ENCODE measurements at regions of chr4 and their contacts with region 1.

Region 1: DNA sequence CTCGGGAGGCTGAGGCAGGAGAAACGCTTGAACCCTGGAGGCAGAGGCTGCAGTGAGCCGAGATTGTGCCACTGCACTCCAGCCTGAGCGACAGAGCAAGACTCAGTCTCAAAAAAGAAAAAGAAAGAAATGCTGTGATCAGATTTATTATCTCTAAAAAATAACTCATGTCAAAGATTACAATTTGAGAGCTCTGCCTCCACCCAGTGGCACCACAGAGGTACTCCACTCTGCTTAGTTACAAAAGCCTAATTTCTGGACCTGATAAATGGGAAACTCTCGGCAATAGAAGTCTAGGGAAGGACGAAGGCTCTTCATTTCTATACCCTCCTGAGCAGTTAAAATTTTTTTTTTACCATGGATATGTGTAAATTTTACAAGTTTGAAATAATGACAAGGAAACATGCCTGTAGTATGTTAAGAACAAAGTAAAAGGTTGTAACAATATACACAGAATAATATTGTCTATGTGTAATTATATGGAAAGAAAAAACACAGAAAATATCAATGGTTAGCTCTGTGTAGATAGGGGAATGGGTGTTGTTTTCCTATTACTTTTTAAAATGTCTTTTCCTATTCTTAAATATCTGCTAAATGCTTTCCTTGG is 149.8 kb downstream of the STIM2 start:
- DNase-seq: peak; percentile 43 to 55
- H3K4me3 ChIP-seq: no peak overlapping the region
- H3K4me3 Mint-ChIP-seq: no peak overlapping the region
- H3K27ac Mint-ChIP-seq: no peak overlapping the region
- H3K4me1 ChIP-seq: no peaks in the 10 kb centered on the region
- H3K4me1 Mint-ChIP-seq: no peaks in the 10 kb centered on the region
- H3K27me3 ChIP-seq: no peaks in the 10 kb centered on the region
- H3K27me3 Mint-ChIP-seq: no peaks in the 10 kb centered on the region
- CTCF ChIP-seq: peak; percentile 74 to 80

Region 2: DNA sequence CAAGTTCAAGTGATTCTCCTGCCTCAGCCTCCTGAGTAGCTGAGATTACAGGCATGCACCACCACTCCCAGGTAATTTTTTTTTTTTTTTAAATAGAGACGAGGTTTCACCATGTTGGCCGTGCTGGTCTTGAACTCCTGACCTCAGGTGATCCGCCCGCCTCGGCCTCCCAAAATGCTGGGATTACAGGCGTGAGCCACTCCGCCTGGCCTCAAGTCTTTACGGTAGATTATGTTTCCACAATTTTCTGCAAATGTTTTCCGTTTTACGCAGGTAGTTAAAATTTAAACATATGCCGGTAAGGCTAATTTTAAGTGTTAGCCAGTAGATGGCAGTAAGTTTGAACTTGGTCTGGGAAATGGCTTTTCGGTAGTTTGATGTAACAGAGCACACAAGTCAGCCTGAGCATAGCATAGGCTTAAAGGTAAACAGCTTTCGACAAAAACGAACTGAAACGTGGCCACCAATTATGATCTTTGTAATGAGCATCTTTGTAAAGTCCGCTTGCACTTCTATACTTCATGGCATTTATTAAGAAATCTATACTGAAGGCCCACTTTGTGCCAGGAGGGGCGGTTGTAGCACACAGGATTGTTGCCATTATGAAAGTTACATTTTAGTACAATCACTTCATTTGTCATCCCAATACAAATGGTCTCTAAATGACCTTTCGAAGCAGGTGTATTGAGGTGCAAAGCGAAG is 551.2 kb before region 1 on chr4:
- CTCF ChIA-PET with region 1: no interaction called
- POLR2A ChIA-PET with region 1: no interaction called
- intact Hi-C with region 1: loop called (anchors 1 kb)
- DNase-seq: peak in 1 of 2 experiments; percentile 36
- H3K4me3 ChIP-seq: no peak overlapping the region
- H3K4me3 Mint-ChIP-seq: peak overlapping the region; percentile 46
- H3K27ac Mint-ChIP-seq: no peak overlapping the region
- H3K4me1 ChIP-seq: no peaks in the 10 kb centered on the region
- H3K4me1 Mint-ChIP-seq: no peaks in the 10 kb centered on the region
- H3K27me3 ChIP-seq: no peaks in the 10 kb centered on the region
- H3K27me3 Mint-ChIP-seq: no peaks in the 10 kb centered on the region
- CTCF ChIP-seq: peak; percentile 42 to 51

Region 3: DNA sequence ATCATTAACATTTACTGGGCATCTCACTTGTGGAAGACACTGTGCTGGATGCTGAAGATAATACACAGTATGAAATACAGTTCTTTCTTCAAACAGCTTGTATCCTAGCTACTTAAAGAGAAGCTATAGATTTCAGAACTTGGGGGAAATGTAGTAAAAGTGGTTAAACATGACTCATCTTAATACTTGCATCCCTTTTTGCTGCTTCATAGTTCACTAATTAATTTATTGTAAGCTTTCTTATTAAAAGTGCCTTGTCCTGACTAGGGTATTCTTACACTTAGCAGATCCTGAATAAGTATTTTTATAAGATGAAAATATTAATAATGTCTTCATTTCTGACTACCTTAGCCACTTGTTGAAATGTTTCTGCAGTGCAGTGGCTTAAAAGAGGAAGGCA is 282.6 kb before region 1 on chr4:
- CTCF ChIA-PET with region 1: no interaction called
- POLR2A ChIA-PET with region 1: no interaction called
- intact Hi-C with region 1: loop called (anchors 1 kb)
- DNase-seq: no peak
- H3K4me3 ChIP-seq: no peak overlapping the region
- H3K4me3 Mint-ChIP-seq: no peak overlapping the region
- H3K27ac Mint-ChIP-seq: no peak overlapping the region
- H3K4me1 ChIP-seq: peaks cover 18% of the 10 kb centered on the region
- H3K4me1 Mint-ChIP-seq: peaks cover 9% of the 10 kb centered on the region
- H3K27me3 ChIP-seq: no peaks in the 10 kb centered on the region
- H3K27me3 Mint-ChIP-seq: no peaks in the 10 kb centered on the region
- CTCF ChIP-seq: no peak

Region 4: GRCh38 chr4:26787461-26788340 is 222.7 kb before region 1 on chr4:
- CTCF ChIA-PET with region 1: no interaction called
- POLR2A ChIA-PET with region 1: no interaction called
- intact Hi-C with region 1: loop called (anchors 10 kb)
- DNase-seq: peak in 1 of 2 experiments; percentile 5
- H3K4me3 ChIP-seq: no peak overlapping the region
- H3K4me3 Mint-ChIP-seq: no peak overlapping the region
- H3K27ac Mint-ChIP-seq: no peak overlapping the region
- H3K4me1 ChIP-seq: no peaks in the 10 kb centered on the region
- H3K4me1 Mint-ChIP-seq: no peaks in the 10 kb centered on the region
- H3K27me3 ChIP-seq: no peaks in the 10 kb centered on the region
- H3K27me3 Mint-ChIP-seq: no peaks in the 10 kb centered on the region
- CTCF ChIP-seq: no peak